Esophagus muscularis mucosa (tissue), 4 donors: ENCODE measurements at regions of chr20 and their contacts with region 1.

Region 1: DNA sequence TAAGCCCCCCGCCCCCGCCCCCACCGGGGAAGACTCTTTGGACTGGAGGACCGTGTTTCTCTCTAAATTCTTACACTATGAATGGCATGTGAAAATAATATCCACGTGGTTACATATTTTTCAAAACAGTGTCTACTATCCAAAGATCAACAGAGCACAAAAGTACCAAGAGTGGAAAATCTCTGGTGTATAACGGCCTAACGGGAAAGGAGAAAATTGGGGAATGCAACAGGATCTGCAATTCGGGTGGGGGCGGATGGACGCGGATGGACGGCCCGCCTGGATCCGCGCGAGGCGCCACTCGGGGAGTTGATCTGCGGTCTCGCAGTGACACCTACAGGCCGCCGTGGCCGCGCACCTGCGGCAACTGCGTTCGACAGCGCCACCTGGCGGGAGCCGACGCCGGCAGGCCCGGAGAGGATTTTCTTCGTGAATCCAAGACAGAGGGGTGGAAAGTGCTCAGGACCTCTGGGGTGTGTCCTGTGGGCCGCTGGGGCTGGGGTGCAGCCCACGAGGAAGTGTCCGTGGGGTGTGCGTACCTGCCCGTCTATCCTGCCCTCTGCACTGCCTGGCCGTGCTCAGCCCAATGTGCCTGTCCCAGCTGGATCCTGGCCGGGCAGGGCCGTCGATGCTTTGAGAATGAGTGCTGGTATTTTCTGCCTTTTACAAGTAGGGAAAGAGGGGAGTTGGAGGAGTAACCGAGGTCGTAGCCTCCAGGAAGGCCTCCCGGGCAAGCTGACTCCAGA is 18.6 kb downstream of the ANKRD60 start:
- DNase-seq: peak; percentile 93
- H3K4me3 ChIP-seq: peak overlapping the region in 1 of 4 donors; percentile 19
- H3K27ac ChIP-seq: no peak overlapping the region
- H3K4me1 ChIP-seq: peaks cover 0 to 8% (median 4%) of the 10 kb centered on the region in 4 donors
- H3K27me3 ChIP-seq: peaks cover 0 to 22% (median 2%) of the 10 kb centered on the region in 4 donors
- CTCF ChIP-seq: peak; percentile 100
- EP300 ChIP-seq: no peak
- POLR2A ChIP-seq: no peak

Region 2: DNA sequence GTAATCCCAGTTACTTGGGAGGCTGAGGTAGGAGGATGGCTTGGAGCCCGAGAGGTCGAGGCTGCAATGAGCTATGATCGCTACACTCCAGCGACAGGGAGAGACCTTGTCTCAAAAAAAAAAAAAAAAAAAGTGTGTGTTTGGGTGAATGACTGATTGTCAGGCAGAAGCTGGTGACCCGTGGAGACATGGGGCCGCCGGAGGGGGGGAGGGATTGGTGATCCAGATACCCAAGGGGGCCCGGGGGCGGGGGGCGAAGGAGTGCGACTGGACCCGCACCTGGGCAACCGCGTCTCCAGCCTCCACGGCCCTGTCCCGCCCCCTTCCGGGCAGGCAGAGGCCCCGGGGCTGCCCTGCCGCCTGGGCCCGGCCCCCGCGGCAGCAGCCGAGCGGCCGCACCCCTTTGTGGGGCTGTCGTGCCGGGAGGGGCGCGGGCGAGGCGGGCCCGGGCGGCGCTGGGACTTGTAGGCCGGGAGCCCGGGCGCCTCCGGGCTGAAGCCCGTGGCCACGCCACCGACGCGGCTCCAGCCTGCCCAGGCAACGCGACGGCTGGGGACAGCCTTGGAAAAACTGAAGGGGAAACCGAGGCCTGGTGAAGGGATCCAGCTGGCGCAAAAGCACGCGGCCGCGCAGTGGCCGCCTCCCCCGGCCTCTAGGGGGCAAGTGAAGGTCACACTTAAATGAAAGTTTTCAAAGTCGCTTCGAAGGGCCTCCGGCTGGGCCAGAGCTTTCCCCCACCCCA is 820.7 kb before region 1 on chr20:
- intact Hi-C with region 1: loop called (anchors 10 kb)
- DNase-seq: no peak
- H3K4me3 ChIP-seq: peak overlapping the region; percentile 46 to 59 (median 48)
- H3K27ac ChIP-seq: peak overlapping the region; percentile 82 to 94 (median 85)
- H3K4me1 ChIP-seq: peaks cover 41 to 54% (median 47%) of the 10 kb centered on the region in 4 donors
- H3K27me3 ChIP-seq: no peaks in the 10 kb centered on the region
- CTCF ChIP-seq: peak in 2 of 3 experiments; percentile 20 to 31
- EP300 ChIP-seq: no peak
- POLR2A ChIP-seq: peak; percentile 49

Region 3: GRCh38 chr20:57514273-57514751 is 695.5 kb before region 1 on chr20:
- intact Hi-C with region 1: loop called (anchors 2 kb)
- DNase-seq: peak; percentile 94
- H3K4me3 ChIP-seq: no peak overlapping the region
- H3K27ac ChIP-seq: no peak overlapping the region
- H3K4me1 ChIP-seq: peaks cover 0 to 9% (median 4%) of the 10 kb centered on the region in 4 donors
- H3K27me3 ChIP-seq: no peaks in the 10 kb centered on the region
- CTCF ChIP-seq: peak; percentile 82 to 89 (median 87)
- EP300 ChIP-seq: no peak
- POLR2A ChIP-seq: no peak